Breast epithelium (tissue), 4 donors: ENCODE measurements at regions of chr2 and their contacts with region 1.

Region 1: DNA sequence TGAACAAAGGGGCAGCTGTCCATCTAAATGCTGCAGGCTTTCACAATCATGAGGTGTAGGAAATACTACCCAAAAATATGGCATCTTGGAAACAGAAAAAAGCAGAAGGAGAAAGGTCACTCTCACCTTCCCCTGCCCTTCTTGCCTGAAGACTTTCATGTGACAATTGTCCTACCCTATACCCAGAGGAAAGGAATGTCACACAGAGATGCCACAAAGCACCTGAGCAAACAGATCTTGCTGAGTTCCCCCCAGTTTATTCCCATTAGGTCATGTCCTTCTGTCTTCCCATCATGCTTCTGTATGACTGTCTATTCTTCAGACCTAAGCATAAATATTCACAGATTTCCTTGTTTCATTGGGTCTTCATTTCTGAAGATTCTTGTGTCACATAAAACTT is 116.6 kb upstream of the MSH6 start:
- DNase-seq: no peak
- H3K4me3 ChIP-seq: no peak overlapping the region
- H3K27ac ChIP-seq: no peak overlapping the region
- H3K4me1 ChIP-seq: no peaks in the 10 kb centered on the region
- H3K27me3 ChIP-seq: no peaks in the 10 kb centered on the region
- CTCF ChIP-seq: no peak
- POLR2A ChIP-seq: no peak

Region 2: DNA sequence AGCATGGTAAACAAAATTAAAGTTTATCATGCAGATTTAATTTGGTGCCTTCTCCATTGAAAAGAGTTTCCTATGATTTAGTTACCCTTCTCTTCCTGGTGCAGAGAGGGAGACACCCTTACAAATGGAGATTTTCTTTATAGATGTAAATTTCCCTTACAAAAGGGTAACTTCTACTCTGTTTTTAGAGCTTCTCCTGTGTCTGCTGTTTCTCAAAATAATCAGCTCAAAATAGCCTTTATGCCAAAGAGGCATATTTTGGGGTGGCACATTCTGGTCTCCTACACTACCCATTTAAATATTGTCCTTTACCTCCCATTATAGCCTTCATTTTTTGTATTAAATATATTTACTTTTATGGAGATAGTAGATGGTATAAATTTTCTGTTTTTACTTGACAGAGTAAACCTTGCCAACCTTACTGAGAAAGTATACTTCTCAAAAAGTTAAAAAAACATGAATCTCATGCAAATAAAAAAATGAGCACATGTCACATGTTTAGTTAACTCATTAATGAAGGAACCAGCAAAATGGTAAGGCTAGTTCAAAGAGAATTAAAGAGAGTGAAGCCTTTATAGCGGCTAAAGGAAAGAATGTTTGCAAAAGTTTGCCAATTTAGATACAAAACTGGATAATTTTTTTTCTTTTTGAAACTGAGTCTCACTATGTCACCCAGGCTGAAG is 33.3 kb after region 1 on chr2:
- intact Hi-C with region 1: loop called (anchors 2 kb)
- DNase-seq: no peak
- H3K4me3 ChIP-seq: no peak overlapping the region
- H3K27ac ChIP-seq: no peak overlapping the region
- H3K4me1 ChIP-seq: no peaks in the 10 kb centered on the region
- H3K27me3 ChIP-seq: no peaks in the 10 kb centered on the region
- CTCF ChIP-seq: no peak
- POLR2A ChIP-seq: no peak